Calu3 (cell line): ENCODE measurements at regions of chr20 and their contacts with region 1.

Region 1: GRCh38 chr20:57718490-57719271 is 8.9 kb upstream of the PMEPA1 start:
- DNase-seq: peak; percentile 99
- H3K4me3 Mint-ChIP-seq: peak overlapping the region; percentile 76
- H3K27ac Mint-ChIP-seq: peak overlapping the region; percentile 92
- H3K4me1 Mint-ChIP-seq: peaks cover 52% of the 10 kb centered on the region
- H3K27me3 Mint-ChIP-seq: no peaks in the 10 kb centered on the region
- CTCF ChIP-seq: no peak

Region 2: DNA sequence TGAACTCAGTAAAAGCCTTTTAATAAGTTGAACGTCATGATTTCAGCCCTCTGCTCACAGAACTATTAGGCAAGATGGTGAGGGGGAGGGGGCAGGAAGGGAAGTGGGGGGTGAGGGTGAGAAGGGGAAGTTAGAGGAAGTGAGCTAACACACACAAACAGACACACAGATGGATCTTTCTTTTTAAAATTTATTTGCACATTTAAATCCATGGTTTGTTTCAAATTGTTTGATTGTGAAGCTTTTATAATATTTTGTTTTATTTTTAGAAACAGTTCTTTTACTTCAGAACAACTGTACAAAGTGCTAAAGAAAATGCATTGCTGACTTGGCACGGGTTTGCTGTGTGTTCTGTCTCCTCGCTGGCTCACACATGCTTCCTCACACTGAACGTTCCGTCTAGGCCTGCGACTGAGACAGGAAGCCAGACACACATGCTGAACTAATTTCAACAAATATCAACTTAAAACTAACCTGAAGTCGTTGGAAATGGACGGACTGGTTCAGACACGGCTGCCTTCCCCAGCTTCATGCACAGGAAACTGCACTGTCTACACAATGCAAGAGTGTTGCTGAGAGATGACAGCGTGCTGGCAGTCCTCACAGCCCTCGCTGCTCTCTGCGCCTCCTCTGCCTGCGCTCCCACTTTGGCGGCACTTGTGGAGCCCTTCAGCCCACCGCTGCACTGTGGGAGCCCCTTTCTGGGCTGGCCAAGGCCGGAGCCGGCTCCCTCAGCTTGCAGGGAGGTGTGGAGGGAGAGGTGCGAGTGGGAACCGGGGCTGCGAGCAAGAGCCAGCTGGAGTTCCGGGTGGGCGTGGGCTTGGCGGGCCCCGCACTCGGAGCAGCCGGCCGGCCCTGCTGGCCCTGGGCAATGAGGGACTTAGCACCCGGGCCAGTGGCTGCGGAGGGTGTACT is 90.4 kb before region 1 on chr20:
- CTCF ChIA-PET with region 1: no interaction called
- intact Hi-C with region 1: no loop called
- DNase-seq: no peak
- H3K4me3 Mint-ChIP-seq: no peak overlapping the region
- H3K27ac Mint-ChIP-seq: no peak overlapping the region
- H3K4me1 Mint-ChIP-seq: no peaks in the 10 kb centered on the region
- H3K27me3 Mint-ChIP-seq: no peaks in the 10 kb centered on the region
- CTCF ChIP-seq: no peak

Region 3: GRCh38 chr20:57638173-57638894 is 80.3 kb before region 1 on chr20:
- CTCF ChIA-PET with region 1: no interaction called
- intact Hi-C with region 1: no loop called
- DNase-seq: no peak
- H3K4me3 Mint-ChIP-seq: no peak overlapping the region
- H3K27ac Mint-ChIP-seq: no peak overlapping the region
- H3K4me1 Mint-ChIP-seq: peaks cover 15% of the 10 kb centered on the region
- H3K27me3 Mint-ChIP-seq: no peaks in the 10 kb centered on the region
- CTCF ChIP-seq: no peak

Region 4: DNA sequence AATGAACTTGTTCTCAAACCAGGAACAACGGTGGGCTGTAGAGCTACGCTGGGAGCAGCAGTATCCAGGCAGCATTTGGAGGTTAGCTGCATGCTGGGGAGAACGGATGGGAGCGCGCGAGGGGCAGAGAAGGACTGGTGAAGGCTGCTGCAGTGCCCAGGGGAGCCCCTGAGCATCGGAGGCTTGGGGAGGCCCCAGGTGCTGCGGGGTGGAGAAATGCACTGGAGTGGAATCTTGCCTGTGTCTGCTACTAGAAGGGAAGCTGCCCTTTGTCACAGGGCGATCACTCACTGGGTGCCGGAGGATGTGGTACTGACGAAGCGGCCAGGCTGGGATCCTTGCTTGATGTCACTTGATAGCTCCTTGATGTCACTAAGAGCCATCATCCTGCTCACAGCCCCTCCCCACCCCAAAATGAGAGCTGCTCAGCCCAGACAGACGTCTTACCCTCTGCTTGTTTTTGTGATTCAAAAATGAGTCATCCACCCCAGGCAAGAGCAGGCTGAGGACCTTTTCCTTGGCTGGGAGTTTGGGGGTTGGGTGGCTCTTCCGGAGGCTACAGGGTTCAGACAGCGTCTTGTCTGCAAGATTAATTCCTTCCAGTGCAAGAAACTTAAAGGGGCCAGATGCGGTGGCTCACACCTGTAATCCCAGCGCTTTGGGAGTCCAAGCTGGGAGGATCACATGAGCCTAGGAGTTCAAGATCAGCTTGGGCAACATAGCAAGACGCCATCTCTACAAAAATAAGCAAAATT is 53.8 kb after region 1 on chr20:
- CTCF ChIA-PET with region 1: no interaction called
- intact Hi-C with region 1: loop called (anchors 10 kb)
- DNase-seq: peak; percentile 66
- H3K4me3 Mint-ChIP-seq: peak overlapping the region; percentile 18
- H3K27ac Mint-ChIP-seq: peak overlapping the region; percentile 30
- H3K4me1 Mint-ChIP-seq: peaks cover 41% of the 10 kb centered on the region
- H3K27me3 Mint-ChIP-seq: no peaks in the 10 kb centered on the region
- CTCF ChIP-seq: no peak